ENCODE measurements at regions of chr15 and their contacts with region 1.

Region 1: GRCh38 chr15:40382580-40383456 is at the start of gene KNSTRN:
- DNase-seq: peak; percentile 78 to 93 (median 91)
- ATAC-seq: peak; percentile 100
- H3K4me3 ChIP-seq: peak within 1 kb of the TSS; percentile 70
- H3K4me3 Mint-ChIP-seq: peak within 1 kb of the TSS; percentile 92 to 99 (median 98)
- H3K27ac ChIP-seq: peak within 1 kb of the TSS; percentile 65
- H3K27ac Mint-ChIP-seq: peak within 1 kb of the TSS; percentile 63 to 95 (median 85)
- H3K4me1 ChIP-seq: peaks cover 6 to 7% of the 10 kb centered on the region in 2 donors
- H3K4me1 Mint-ChIP-seq: peaks cover 14 to 26% (median 22%) of the 10 kb centered on the region in 7 donors
- H3K27me3 ChIP-seq: no peaks in the 10 kb centered on the region
- H3K27me3 Mint-ChIP-seq: peaks cover 0 to 13% (median 0%) of the 10 kb centered on the region in 5 donors
- total RNA-seq, gene KNSTRN: 3.7 to 39.6 (median 6.2) TPM

Region 2: GRCh38 chr15:40038638-40039543 is 343.9 kb before region 1 on chr15 and contains the start of gene SRP14:
- CTCF ChIA-PET with region 1: no interaction called
- POLR2A ChIA-PET with region 1: no interaction called
- intact Hi-C with region 1: loop called in 1 of 2 experiments (anchors 1 kb)
- DNase-seq: peak; percentile 74 to 93 (median 87)
- ATAC-seq: peak; percentile 98
- H3K4me3 ChIP-seq: peak within 1 kb of the TSS; percentile 86
- H3K4me3 Mint-ChIP-seq: peak within 1 kb of the TSS; percentile 92 to 100 (median 100)
- H3K27ac ChIP-seq: peak within 1 kb of the TSS; percentile 96
- H3K27ac Mint-ChIP-seq: peak within 1 kb of the TSS; percentile 94 to 99 (median 98)
- H3K4me1 ChIP-seq: peaks cover 15 to 18% of the 10 kb centered on the region in 2 donors
- H3K4me1 Mint-ChIP-seq: peaks cover 28 to 58% (median 53%) of the 10 kb centered on the region in 7 donors
- H3K27me3 ChIP-seq: no peaks in the 10 kb centered on the region
- H3K27me3 Mint-ChIP-seq: no peaks in the 10 kb centered on the region
- total RNA-seq, gene SRP14: 92.1 to 157 (median 111) TPM

Region 3: DNA sequence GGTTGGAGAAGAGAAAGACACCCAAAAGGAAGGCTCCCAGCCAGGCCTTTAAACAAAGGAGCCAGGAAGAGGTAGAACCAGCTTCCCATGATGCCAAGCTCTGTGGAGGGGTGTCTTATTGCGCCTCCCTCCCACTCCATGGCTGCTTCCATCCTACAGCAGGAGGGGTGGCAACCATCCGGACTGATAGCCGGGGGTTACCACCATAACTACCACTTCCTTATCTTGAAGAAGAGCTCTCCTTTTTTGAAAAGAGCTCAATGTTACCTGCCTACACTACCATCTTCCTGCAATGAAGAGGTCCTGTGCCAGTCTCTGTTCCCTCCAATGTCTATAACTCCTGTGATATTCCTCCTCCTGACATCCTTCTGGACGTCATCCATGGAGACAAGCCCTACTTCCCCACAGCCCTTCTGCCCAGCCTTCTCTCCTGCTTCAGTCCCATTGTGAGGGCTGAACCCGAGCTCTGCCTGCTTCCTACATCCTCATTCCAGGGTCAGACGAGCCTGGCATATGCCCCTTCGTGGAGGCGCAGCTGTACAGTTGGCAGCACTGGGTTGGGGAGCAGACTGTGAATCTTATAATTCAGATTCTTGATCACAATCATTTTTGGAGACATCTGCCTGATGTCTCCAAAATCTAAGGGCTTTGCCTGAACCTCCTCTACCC is 50.6 kb before region 1 on chr15:
- CTCF ChIA-PET with region 1: no interaction called
- POLR2A ChIA-PET with region 1: no interaction called
- intact Hi-C with region 1: no loop called
- DNase-seq: no peak
- ATAC-seq: no peak
- H3K4me3 ChIP-seq: no peak overlapping the region
- H3K4me3 Mint-ChIP-seq: no peak overlapping the region
- H3K27ac ChIP-seq: no peak overlapping the region
- H3K27ac Mint-ChIP-seq: peak overlapping the region in 1 of 9 donors; percentile 26
- H3K4me1 ChIP-seq: peaks cover 0 to 14% of the 10 kb centered on the region in 2 donors
- H3K4me1 Mint-ChIP-seq: peaks cover 0 to 36% (median 25%) of the 10 kb centered on the region in 7 donors
- H3K27me3 ChIP-seq: no peaks in the 10 kb centered on the region
- H3K27me3 Mint-ChIP-seq: no peaks in the 10 kb centered on the region

Region 4: GRCh38 chr15:40357723-40358470 is 24.9 kb before region 1 on chr15 and contains the start of gene DISP2:
- CTCF ChIA-PET with region 1: no interaction called
- POLR2A ChIA-PET with region 1: interaction called, 4 read pairs
- intact Hi-C with region 1: loop called (anchors 1 to 2 kb)
- DNase-seq: peak; percentile 80 to 97 (median 91)
- ATAC-seq: peak; percentile 94
- H3K4me3 ChIP-seq: peak within 1 kb of the TSS; percentile 63
- H3K4me3 Mint-ChIP-seq: peak within 1 kb of the TSS; percentile 75 to 90 (median 83)
- H3K27ac ChIP-seq: no peak within 1 kb of the TSS
- H3K27ac Mint-ChIP-seq: peak within 1 kb of the TSS in 2 of 9 donors; percentile 38 to 48
- H3K4me1 ChIP-seq: peaks cover 0 to 12% of the 10 kb centered on the region in 2 donors
- H3K4me1 Mint-ChIP-seq: peaks cover 7 to 15% (median 13%) of the 10 kb centered on the region in 7 donors
- H3K27me3 ChIP-seq: no peaks in the 10 kb centered on the region
- H3K27me3 Mint-ChIP-seq: peaks cover 0 to 30% (median 9%) of the 10 kb centered on the region in 5 donors
- total RNA-seq, gene DISP2: 0.05 to 0.51 (median 0.07) TPM in 4 of 5 experiments, not detected in the other

Region 5: GRCh38 chr15:40398413-40398873 is 15.6 kb after region 1 on chr15:
- CTCF ChIA-PET with region 1: interaction called, 3 read pairs
- POLR2A ChIA-PET with region 1: interaction called, 19 read pairs
- intact Hi-C with region 1: loop called in 1 of 2 experiments (anchors 2 kb)
- DNase-seq: no peak
- ATAC-seq: peak; percentile 89
- H3K4me3 ChIP-seq: no peak overlapping the region
- H3K4me3 Mint-ChIP-seq: peak overlapping the region; percentile 27 to 81 (median 58)
- H3K27ac ChIP-seq: no peak overlapping the region
- H3K27ac Mint-ChIP-seq: peak overlapping the region in 3 of 9 donors; percentile 25 to 65 (median 35)
- H3K4me1 ChIP-seq: peaks cover 8% of the 10 kb centered on the region in 2 donors
- H3K4me1 Mint-ChIP-seq: peaks cover 15 to 26% (median 20%) of the 10 kb centered on the region in 7 donors
- H3K27me3 ChIP-seq: no peaks in the 10 kb centered on the region
- H3K27me3 Mint-ChIP-seq: no peaks in the 10 kb centered on the region

Region 6: DNA sequence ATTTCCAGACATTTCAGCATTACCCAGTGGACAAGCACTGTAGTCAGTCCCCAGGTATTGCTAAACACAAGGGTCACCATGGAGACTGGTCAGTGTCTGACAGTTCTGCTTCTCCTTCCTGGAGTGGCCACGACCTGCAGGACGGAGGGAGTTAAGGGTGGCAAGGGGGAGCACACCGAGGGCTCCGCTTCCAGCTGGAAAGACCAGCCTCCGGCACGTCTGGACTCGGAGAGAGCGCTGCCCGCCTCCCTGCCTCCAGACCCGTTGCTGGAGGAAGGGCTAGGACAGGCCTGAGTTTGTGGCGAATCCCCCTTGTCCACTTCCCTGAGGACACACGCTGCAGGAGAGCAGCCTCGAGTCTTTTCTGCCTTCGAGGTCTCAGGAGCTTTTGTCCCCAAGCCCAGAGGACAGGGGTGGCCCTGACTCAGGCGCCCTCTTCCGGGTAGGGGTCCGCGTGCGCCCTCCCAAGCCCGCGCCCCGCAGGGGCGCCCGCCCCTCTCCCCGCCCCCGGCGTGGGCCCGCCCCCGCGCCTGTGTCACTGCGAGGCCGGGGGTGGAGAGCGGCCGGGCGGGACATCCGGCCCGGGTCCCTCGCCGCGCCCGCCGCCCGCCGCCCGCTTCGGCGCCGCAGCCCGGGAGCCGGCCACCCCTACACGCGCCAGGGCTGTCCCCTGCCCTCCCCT is 87.7 kb after region 1 on chr15 and contains the start of gene CHST14:
- CTCF ChIA-PET with region 1: no interaction called
- POLR2A ChIA-PET with region 1: interaction called, 4 read pairs
- intact Hi-C with region 1: loop called in 1 of 2 experiments (anchors 1 kb)
- DNase-seq: peak; percentile 24 to 68 (median 53)
- ATAC-seq: peak; percentile 88
- H3K4me3 ChIP-seq: peak within 1 kb of the TSS; percentile 89
- H3K4me3 Mint-ChIP-seq: peak within 1 kb of the TSS; percentile 90 to 96 (median 92)
- H3K27ac ChIP-seq: peak within 1 kb of the TSS; percentile 81
- H3K27ac Mint-ChIP-seq: peak within 1 kb of the TSS; percentile 80 to 95 (median 87)
- H3K4me1 ChIP-seq: peaks cover 8 to 16% of the 10 kb centered on the region in 2 donors
- H3K4me1 Mint-ChIP-seq: peaks cover 15 to 47% (median 37%) of the 10 kb centered on the region in 7 donors
- H3K27me3 ChIP-seq: no peaks in the 10 kb centered on the region
- H3K27me3 Mint-ChIP-seq: peaks cover 0 to 3% (median 0%) of the 10 kb centered on the region in 5 donors
- total RNA-seq, gene CHST14: 7.3 to 12.5 (median 10.8) TPM